Activated CD8-positive, alpha-beta memory T cell treated with anti-CD3 and anti-CD28 coated beads, Interleukin-2, amount 10 ng/mL, durations not matched to agents 7 days and 5 days (primary cell): ENCODE measurements at regions of chrX and their contacts with region 1.

Region 1: GRCh38 chrX:70030301-70030767 is 19.4 kb downstream of the AWAT2 start:
- DNase-seq: peak; percentile 54
- ATAC-seq: peak; percentile 57
- H3K4me3 Mint-ChIP-seq: no peak overlapping the region
- H3K27ac Mint-ChIP-seq: no peak overlapping the region
- H3K4me1 Mint-ChIP-seq: peaks cover 25% of the 10 kb centered on the region
- H3K27me3 Mint-ChIP-seq: no peaks in the 10 kb centered on the region

Region 2: DNA sequence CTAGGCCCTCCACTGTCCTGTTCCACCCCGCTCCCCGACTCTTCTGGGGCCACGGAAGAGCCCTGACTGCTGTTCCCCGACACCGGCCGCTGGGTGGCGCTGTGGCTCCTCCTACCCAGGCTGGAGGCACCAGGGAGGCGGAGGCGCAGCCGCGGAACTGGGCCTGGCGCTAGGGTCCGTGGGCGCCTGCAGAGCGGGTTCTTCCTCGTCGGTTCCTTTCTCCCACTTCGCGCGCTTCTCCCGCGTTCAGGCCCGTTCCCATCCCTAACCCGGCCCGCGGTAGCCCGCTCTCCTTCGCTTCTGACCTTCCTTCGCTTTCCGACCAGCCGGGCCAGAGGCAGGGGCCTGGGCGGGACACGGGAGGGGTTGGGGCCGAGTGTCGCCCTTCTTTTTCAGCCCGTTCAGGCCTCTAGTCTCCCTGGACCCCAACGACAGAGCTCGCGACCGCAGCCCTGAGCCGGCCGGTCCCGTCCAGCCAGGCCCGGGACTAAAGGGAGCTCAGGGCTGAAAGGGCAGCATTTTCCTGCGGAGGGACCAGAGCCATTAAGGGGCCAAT is 491.9 kb before region 1 on chrX:
- CTCF ChIA-PET with region 1: interaction called, 13 read pairs
- DNase-seq: peak; percentile 64
- ATAC-seq: peak; percentile 93
- H3K4me3 Mint-ChIP-seq: no peak overlapping the region
- H3K27ac Mint-ChIP-seq: no peak overlapping the region
- H3K4me1 Mint-ChIP-seq: peaks cover 10% of the 10 kb centered on the region
- H3K27me3 Mint-ChIP-seq: no peaks in the 10 kb centered on the region

Region 3: DNA sequence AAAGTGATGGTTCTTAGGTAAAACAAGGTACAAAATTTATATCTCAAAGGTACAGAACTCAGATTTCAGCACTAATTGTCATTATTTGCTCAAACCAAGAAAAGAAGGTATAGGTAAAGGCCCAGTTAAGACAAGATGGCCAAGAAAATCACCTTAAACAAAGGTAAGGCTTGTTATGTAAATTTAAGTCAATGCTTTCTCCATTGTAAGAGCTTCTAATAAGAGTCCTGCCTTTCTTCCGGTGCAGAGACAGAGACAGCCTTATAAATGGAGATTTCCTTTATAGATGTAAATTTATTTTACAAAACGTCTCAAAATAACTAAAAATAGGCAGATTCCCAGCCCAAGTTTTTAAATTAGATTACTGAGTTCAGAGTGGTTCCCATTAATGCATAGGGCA is 324.5 kb before region 1 on chrX:
- CTCF ChIA-PET with region 1: no interaction called
- DNase-seq: no peak
- ATAC-seq: no peak
- H3K4me3 Mint-ChIP-seq: no peak overlapping the region
- H3K27ac Mint-ChIP-seq: no peak overlapping the region
- H3K4me1 Mint-ChIP-seq: no peaks in the 10 kb centered on the region
- H3K27me3 Mint-ChIP-seq: no peaks in the 10 kb centered on the region

Region 4: GRCh38 chrX:70096052-70096451 is 65.7 kb after region 1 on chrX:
- CTCF ChIA-PET with region 1: interaction called, 10 read pairs
- DNase-seq: no peak
- ATAC-seq: no peak
- H3K4me3 Mint-ChIP-seq: no peak overlapping the region
- H3K27ac Mint-ChIP-seq: no peak overlapping the region
- H3K4me1 Mint-ChIP-seq: no peaks in the 10 kb centered on the region
- H3K27me3 Mint-ChIP-seq: peaks cover 3% of the 10 kb centered on the region

Region 5: DNA sequence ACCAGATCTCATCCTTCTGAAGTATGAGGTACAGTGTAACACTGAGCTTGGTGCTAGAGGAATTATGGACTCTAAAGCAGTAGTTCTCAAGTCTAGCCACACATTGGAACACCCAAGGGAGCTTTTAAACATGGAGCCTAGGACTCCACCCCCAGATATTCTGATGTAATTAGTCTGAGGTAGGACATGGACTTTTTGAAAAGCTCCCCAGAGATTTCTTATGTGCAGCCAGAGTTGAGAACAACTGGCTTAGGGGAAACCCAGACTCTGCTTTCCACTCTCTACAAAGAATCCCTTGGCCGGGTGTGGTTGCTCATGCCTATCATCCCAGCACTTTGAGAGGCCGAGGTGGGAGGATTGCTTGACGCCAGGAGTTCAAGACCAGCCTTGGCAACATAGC is 381.1 kb after region 1 on chrX:
- CTCF ChIA-PET with region 1: no interaction called
- DNase-seq: no peak
- ATAC-seq: no peak
- H3K4me3 Mint-ChIP-seq: no peak overlapping the region
- H3K27ac Mint-ChIP-seq: no peak overlapping the region
- H3K4me1 Mint-ChIP-seq: no peaks in the 10 kb centered on the region
- H3K27me3 Mint-ChIP-seq: no peaks in the 10 kb centered on the region